ENCODE measurements at regions of chr1 and their contacts with region 1.

Region 1: GRCh38 chr1:38012363-38013226 is at the start of gene UTP11:
- DNase-seq: peak; percentile 82
- ATAC-seq: peak; percentile 85
- H3K4me3 Mint-ChIP-seq: peak within 1 kb of the TSS; percentile 99
- H3K27ac Mint-ChIP-seq: peak within 1 kb of the TSS; percentile 97
- H3K4me1 Mint-ChIP-seq: peaks cover 45% of the 10 kb centered on the region
- H3K27me3 Mint-ChIP-seq: no peaks in the 10 kb centered on the region
- total RNA-seq, gene UTP11: 27.5 to 28.8 TPM

Region 2: DNA sequence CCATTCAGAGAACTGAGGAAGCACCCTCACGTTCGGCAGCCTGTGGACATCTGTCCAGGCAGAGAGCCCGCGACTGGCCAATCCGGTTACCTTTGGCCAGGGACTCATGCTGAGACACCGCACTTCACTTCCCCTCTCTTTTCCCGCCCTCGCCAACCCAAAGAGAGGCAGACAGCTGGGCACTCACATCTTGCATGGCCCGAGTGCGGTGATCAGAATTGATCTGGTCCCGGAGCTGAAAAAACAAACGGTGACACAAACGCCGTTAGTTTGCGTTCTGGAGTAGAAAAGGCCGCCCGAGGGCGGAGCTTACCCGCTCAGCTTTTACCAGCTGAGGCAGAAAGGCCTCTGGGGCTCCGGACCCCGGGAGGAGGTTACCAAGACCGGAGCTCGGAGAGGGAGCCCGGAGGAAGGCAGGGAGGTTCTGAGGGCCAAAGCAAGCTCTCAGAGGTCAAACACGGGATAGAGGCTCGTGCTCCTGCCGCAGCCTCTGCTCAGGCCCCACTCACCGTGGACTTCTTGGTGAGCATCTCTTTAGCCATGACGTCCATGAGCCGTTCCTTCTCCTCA is 23.1 kb before region 1 on chr1:
- POLR2A ChIA-PET with region 1: interaction called, 45 read pairs
- DNase-seq: peak; percentile 64
- ATAC-seq: peak; percentile 34
- H3K4me3 Mint-ChIP-seq: peak overlapping the region; percentile 98
- H3K27ac Mint-ChIP-seq: peak overlapping the region; percentile 95
- H3K4me1 Mint-ChIP-seq: peaks cover 18% of the 10 kb centered on the region
- H3K27me3 Mint-ChIP-seq: no peaks in the 10 kb centered on the region

Region 3: GRCh38 chr1:37995751-37996345 is 16.7 kb before region 1 on chr1:
- POLR2A ChIA-PET with region 1: interaction called, 45 read pairs
- DNase-seq: peak; percentile 52
- ATAC-seq: peak; percentile 38
- H3K4me3 Mint-ChIP-seq: peak overlapping the region; percentile 84
- H3K27ac Mint-ChIP-seq: peak overlapping the region; percentile 51
- H3K4me1 Mint-ChIP-seq: peaks cover 32% of the 10 kb centered on the region
- H3K27me3 Mint-ChIP-seq: no peaks in the 10 kb centered on the region